KBM-7 (cell line): ENCODE measurements at regions of chr3 and their contacts with region 1.

Region 1: DNA sequence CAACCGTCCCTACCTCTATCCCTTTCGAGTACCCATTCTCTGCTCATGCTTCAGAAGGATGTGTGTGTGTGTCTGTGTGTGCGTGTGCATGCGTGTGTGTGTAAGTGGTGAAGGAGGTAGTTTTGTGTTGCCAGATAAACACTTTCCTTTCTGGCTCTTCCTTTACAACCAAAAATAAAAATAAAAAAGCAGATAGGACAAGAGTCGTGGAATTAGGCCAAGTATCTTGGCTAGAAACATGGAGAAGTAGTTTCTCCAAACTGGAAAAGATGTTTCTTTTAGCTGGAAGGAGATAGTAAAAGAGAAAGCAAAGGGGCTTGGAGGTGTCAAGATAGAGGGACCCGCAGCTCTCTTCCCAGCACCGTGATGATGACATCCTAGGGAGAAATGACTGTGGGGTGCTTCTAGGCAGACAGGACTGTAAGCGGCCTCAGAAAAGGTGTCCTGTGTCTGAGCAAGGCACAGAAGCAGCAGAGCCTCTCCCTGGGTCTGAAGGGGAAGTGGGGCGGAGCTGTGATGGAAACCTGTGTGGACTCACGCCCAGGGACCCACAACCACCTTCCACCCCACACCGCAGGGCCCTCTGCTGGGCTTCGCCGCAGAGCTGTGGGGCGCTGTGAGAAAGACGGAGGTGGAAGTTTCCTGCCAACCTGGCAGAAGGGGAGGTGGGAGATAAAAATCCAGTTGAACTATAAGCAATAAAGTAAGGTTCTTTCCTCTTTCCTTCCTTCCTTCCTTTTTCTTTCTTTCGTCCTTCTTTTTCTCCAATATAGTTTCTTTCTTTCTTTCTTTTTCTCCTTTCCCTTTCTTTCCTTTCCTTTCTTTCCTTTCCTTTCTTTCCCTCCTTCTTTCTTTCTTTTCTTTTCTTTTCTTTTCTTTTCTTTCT is 35.3 kb downstream of the MUC20 start:
- DNase-seq: peak; percentile 28

Region 2: DNA sequence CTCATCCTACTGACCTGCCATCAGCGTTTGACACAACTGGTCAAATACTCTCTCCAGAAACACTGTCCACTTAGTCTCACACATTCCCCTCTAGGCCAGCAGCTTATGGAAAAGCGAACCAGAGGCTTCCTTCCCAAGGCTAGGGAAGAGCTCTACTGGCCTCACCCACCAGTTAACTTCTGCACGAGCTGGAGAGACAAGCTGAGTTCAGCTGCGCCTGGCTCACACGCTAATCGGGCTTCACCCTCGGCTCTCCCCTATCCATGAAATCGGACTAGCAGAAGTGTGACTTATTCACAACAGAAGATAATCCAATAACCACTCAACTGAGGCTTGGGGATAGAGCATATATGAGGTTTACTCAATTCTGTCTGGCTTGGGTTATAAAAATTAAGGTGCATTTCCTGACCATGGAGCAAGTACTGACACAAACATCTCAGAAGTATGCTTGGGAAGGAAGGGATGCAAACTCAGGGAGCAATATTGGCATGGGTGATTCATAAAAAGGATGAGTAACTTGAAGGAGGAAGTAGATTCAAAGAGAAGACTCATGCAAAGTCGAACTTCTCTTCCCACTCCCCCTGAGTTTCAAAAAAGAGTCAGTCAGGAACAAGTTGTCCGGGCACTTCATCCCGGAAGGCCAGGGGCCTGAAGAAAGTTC is 558.1 kb before region 1 on chr3:
- in situ Hi-C with region 1: no loop called
- DNase-seq: no peak

Region 3: GRCh38 chr3:195815169-195815771 is 59.2 kb after region 1 on chr3:
- in situ Hi-C with region 1: loop called (anchors 10 kb)
- DNase-seq: no peak

Region 4: DNA sequence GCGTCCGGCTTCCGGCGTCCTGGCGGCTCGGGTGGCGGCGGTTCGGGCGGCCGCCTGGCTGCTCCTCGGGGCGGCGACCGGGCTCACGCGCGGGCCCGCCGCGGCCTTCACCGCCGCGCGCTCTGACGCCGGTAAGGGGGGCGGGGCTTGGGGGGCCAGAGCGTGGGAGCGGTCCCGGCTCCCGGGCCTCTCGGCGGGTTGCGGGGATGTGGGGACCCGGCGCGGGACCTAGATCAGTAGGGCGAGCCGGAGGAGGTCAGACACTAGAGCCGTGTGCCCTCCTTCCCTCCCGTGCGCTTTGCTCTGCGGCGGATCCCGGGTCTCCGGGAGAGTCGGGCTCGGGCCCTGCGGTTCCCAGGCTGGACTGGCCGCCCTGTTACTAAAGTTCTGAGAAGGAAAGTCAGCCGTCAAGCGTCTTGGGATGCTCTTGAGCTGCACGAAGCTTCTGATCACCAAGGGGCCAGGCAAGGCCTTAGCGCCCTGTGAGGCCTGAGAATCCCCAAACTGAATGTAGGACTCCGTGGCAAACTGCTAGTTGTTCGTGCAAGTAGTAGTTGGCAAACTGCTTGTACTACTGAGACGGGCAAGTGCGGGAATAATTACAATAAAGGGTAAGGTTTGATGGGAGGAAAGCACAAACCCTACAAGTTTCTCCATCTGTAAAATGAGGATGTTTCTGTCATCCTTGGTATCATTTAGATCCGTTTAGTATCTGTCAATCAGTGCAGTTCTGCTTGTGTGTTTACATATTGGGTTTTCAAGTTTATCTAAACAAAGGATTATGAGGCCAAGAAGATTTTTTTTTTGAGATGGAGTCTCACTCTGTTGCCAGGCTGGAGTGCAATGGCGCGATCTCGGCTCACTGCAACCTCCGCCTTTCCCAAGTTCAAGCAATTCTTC is 956.7 kb after region 1 on chr3:
- in situ Hi-C with region 1: no loop called
- DNase-seq: peak; percentile 61